Aorta (tissue), 5 donors: ENCODE measurements at regions of chr2 and their contacts with region 1.

Region 1: DNA sequence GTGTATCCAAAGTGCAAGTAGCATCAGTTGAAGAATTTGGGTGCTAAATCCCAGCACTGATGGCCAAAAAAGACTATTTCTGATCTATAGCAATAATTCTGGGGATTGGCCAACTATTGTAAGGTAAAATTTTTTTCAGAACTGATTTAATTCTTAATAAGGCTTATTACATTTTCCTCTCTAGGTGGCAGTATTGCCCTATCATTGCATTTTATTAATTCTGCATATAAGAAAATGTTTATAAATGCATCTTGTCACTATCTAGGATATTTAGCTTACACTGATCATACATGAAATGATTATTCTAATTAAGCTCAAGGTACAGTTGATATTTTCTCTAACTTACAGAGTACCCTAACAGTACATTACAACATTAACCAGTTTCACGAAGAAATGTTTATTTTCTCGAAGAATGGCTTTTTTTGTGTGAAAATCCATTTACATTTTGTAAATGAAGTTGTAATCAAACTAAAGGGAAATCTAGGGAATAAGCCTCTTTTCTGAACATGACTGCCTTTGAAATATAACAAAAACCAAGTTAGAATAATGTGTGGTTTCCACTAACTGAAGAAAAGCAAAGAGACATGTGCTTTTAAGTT is 11.0 kb downstream of the TTN start:
- DNase-seq: no peak
- ATAC-seq: no peak
- H3K4me3 ChIP-seq: no peak overlapping the region
- H3K27ac ChIP-seq: no peak overlapping the region
- H3K4me1 ChIP-seq: no peaks in the 10 kb centered on the region
- H3K27me3 ChIP-seq: no peaks in the 10 kb centered on the region

Region 2: GRCh38 chr2:178914259-178914849 is 118.2 kb after region 1 on chr2:
- intact Hi-C with region 1: loop called (anchors 1 to 2 kb)
- DNase-seq: peak; percentile 88 to 93
- ATAC-seq: peak; percentile 91
- H3K4me3 ChIP-seq: no peak overlapping the region
- H3K27ac ChIP-seq: no peak overlapping the region
- H3K4me1 ChIP-seq: peaks cover 1 to 4% of the 10 kb centered on the region in 2 donors
- H3K27me3 ChIP-seq: no peaks in the 10 kb centered on the region

Region 3: DNA sequence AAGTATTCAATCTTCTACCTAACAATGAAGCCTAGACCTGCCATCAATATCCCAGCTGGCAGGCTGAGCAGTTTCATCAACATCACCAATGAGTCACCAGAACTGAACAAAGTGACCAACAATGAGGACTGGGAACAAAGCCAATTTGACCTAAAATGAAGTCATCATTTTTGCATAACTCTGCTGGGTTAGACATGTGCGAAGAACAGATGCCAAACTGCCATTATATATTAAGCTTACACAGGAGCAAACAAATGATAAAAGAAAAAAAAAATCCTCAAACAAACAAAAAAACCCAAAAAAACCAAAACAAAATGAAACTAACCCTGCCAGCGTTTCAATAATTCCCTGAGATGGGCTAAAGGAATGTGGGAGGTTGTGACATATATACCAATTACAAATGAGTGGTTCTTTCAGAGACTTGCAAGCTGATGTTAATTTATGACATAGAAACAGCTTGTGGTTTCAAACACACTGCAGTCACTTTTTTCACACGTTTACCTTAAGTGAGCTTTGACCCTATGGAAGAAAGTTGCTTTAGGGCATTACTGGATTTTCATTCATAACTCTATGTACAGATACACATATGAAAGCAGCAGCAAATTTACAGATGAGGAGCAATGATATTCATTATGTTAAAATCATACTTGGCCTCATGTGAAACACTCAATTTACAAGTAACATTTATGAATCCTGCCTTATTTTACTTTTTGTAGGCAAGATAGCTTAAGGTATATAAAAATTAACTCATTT is 310.7 kb after region 1 on chr2:
- intact Hi-C with region 1: loop called in 1 of 2 experiments (anchors 10 kb)
- DNase-seq: peak in 1 of 2 donors; percentile 53
- ATAC-seq: peak; percentile 73
- H3K4me3 ChIP-seq: no peak overlapping the region
- H3K27ac ChIP-seq: no peak overlapping the region
- H3K4me1 ChIP-seq: peaks cover 0 to 1% of the 10 kb centered on the region in 2 donors
- H3K27me3 ChIP-seq: no peaks in the 10 kb centered on the region